K562 (cell line): ENCODE measurements at regions of chr7 and their contacts with region 1.

Region 1: DNA sequence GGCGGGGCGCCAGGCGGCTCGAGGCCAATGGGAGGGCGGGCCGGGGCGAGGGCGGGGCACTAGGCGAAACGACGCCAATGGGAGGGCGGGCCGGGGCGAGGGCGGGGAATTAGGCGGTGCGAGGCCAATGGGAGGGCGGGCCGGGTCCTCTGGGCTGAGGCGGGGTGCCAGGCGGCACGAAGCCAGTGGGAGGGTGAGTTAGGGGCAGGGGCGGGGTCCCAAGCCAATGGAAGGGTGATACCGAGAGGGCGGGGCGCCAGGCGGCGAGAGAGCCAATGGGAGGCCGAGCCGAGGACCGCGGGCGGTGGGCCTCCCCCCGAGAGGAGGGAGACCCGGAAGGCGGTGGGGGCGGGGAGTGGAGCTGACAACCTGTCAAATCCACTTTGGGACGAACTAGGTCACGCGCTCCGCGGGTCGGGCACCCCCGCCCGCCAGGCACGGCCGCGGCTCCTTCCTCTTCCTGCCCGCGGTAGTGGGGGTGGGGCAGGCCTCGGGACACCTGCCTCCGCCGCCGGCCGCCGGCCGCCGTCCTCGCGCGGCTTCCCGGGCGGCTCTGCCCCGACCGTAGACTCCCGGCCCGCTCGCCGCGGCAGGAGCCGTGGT is 28.0 kb upstream of the KMT2C start:
- DNase-seq: peak; percentile 100
- ATAC-seq: peak; percentile 93
- H3K4me3 ChIP-seq: peak overlapping the region; percentile 99
- H3K27ac ChIP-seq: peak overlapping the region; percentile 99
- H3K4me1 ChIP-seq: peaks cover 18 to 19% of the 10 kb centered on the region in 2 experiments
- H3K27me3 ChIP-seq: no peaks in the 10 kb centered on the region
- CTCF ChIP-seq: no peak; a peak in 1 of 6 replicates
- EP300 ChIP-seq: peak; percentile 74
- POLR2A ChIP-seq: no peak
- RAD21 ChIP-seq: no peak; a peak in 1 of 4 replicates

Region 2: GRCh38 chr7:152341039-152341913 is 122.5 kb before region 1 on chr7:
- CTCF ChIA-PET with region 1: no interaction called
- POLR2A ChIA-PET with region 1: no interaction called
- in situ Hi-C with region 1: no loop called
- intact Hi-C with region 1: loop called (anchors 10 kb)
- DNase-seq: peak in 3 of 4 experiments; percentile 35 to 84 (median 81)
- ATAC-seq: peak; percentile 99
- H3K4me3 ChIP-seq: no peak overlapping the region
- H3K27ac ChIP-seq: no peak overlapping the region
- H3K4me1 ChIP-seq: peaks cover 0 to 5% of the 10 kb centered on the region in 2 experiments; a peak in 2 of 5 replicates
- H3K27me3 ChIP-seq: no peaks in the 10 kb centered on the region
- CTCF ChIP-seq: peak; percentile 69 to 91 (median 75)
- EP300 ChIP-seq: no peak
- POLR2A ChIP-seq: no peak
- RAD21 ChIP-seq: peak; percentile 78 to 83

Region 3: DNA sequence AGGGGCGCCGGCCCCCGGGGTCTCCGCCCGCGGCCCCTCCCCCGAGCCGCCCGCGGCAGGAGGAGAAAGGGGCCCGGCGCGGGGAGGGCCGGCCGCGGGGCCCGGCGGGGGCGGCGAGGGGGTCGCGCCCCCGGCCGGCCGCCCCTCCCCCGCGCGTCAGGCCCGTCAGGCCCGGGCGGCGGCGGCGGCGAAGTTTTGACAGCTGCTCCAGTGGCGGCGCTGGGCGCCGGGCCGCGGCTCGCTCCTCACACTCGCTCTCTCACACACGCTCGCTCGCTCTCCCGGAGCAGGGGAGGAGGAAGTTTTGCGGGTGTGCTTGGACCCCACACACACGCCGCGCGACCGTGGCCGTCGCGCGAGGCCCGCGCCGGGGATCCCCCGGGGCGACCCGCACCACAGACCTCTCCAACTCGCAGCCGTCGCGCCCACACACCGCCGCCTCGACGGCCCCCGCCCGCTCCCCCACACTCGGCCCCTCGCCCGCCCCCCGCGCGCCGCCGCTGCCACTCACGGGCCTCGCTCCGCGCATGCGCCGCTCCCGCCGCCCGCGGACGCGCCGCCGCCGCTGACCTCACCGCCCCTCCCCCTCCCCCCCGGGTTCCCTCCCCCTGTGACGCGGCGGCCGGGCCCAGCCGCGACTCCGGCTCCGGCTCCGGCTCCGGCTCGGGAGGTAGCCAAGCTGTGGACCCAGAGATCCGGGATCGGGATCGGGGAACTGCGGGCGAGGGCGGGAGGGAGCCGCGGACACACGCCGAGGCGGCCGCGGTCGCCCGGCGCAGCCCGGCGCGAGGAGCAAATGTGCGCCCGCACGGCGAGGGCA is 27.5 kb before region 1 on chr7:
- CTCF ChIA-PET with region 1: no interaction called
- POLR2A ChIA-PET with region 1: interaction called, 3 read pairs
- in situ Hi-C with region 1: no loop called
- intact Hi-C with region 1: loop called (anchors 1 kb)
- DNase-seq: peak; percentile 97 to 98 (median 98)
- ATAC-seq: peak; percentile 63
- H3K4me3 ChIP-seq: peak overlapping the region; percentile 66
- H3K27ac ChIP-seq: peak overlapping the region; percentile 95
- H3K4me1 ChIP-seq: peaks cover 12 to 15% of the 10 kb centered on the region in 2 experiments; a peak in 3 of 5 replicates
- H3K27me3 ChIP-seq: no peaks in the 10 kb centered on the region
- CTCF ChIP-seq: peak in 2 of 3 experiments; percentile 12 to 24; a peak in 1 of 6 replicates
- EP300 ChIP-seq: peak; percentile 59
- POLR2A ChIP-seq: peak; percentile 88
- RAD21 ChIP-seq: peak; percentile 30 to 31; a peak in 3 of 4 replicates